ENCODE measurements at regions of chr4 and their contacts with region 1.

Region 1: DNA sequence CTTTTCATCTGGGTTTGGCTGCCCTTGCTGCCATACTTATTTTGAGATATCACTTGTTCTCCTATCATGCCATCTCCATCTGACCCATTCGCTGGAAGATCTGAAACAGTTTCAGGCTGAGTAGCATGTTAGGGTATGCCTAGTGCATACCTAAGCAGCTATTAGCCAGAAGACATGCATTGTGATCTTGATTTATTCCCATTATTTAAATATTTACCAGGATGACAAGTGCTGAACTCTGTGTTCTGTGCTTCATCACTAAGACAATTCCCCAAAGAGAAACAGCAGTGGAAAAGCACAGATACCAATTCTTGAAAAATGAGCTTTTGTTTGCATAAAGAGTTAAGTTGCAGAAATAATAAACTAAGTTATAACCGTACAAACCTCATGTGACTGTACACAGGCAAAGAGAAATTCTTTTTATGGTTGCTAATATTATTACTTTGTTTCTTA is 271.0 kb upstream of the ARSJ start:
- DNase-seq: no peak
- H3K4me3 Mint-ChIP-seq: no peak overlapping the region
- H3K27ac Mint-ChIP-seq: no peak overlapping the region
- H3K4me1 Mint-ChIP-seq: no peaks in the 10 kb centered on the region
- H3K27me3 Mint-ChIP-seq: no peaks in the 10 kb centered on the region
- CTCF ChIP-seq: no peak

Region 2: GRCh38 chr4:113866611-113867010 is 383.9 kb before region 1 on chr4:
- CTCF ChIA-PET with region 1: no interaction called
- POLR2A ChIA-PET with region 1: no interaction called
- intact Hi-C with region 1: no loop called
- DNase-seq: no peak
- H3K4me3 Mint-ChIP-seq: no peak overlapping the region
- H3K27ac Mint-ChIP-seq: no peak overlapping the region
- H3K4me1 Mint-ChIP-seq: peaks cover 6% of the 10 kb centered on the region
- H3K27me3 Mint-ChIP-seq: no peaks in the 10 kb centered on the region
- CTCF ChIP-seq: no peak

Region 3: GRCh38 chr4:114237997-114238396 is 12.5 kb before region 1 on chr4:
- CTCF ChIA-PET with region 1: no interaction called
- POLR2A ChIA-PET with region 1: no interaction called
- intact Hi-C with region 1: no loop called
- DNase-seq: no peak
- H3K4me3 Mint-ChIP-seq: no peak overlapping the region
- H3K27ac Mint-ChIP-seq: no peak overlapping the region
- H3K4me1 Mint-ChIP-seq: no peaks in the 10 kb centered on the region
- H3K27me3 Mint-ChIP-seq: no peaks in the 10 kb centered on the region
- CTCF ChIP-seq: no peak

Region 4: GRCh38 chr4:114263233-114263632 is 12.8 kb after region 1 on chr4:
- CTCF ChIA-PET with region 1: interaction called, 4 read pairs
- POLR2A ChIA-PET with region 1: interaction called, 36 read pairs
- intact Hi-C with region 1: loop called (anchors 1 kb)
- DNase-seq: peak; percentile 28
- H3K4me3 Mint-ChIP-seq: no peak overlapping the region
- H3K27ac Mint-ChIP-seq: peak overlapping the region; percentile 83
- H3K4me1 Mint-ChIP-seq: peaks cover 25% of the 10 kb centered on the region
- H3K27me3 Mint-ChIP-seq: no peaks in the 10 kb centered on the region
- CTCF ChIP-seq: no peak